ENCODE measurements at regions of chr3 and their contacts with region 1.

Region 1: GRCh38 chr3:124707656-124708062 is 22.6 kb upstream of the UMPS start:
- DNase-seq: peak in 1 of 2 experiments; percentile 35
- H3K4me3 ChIP-seq: no peak overlapping the region
- H3K27ac ChIP-seq: no peak overlapping the region
- H3K4me1 ChIP-seq: peaks cover 9% of the 10 kb centered on the region
- H3K27me3 ChIP-seq: no peaks in the 10 kb centered on the region
- CTCF ChIP-seq: no peak

Region 2: DNA sequence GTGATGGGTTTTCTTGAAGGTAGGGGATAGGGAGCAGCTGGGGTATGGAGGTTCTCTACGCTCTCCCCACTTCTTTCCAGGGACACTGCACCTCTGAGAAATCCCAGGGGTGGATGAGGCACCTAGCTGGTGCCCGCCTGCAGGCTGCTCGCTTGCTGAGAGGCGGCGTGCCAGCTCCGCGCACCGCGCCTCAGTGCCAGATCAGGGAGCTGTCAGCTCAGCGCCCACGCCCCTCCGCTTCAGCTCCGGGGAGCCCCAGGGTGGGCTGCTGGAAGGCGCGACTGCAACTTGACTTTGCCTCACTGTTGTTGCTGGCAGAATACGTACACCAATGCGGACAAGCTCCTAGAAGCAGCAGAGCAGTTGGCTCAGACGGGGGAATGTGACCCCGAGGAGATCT is 323.1 kb before region 1 on chr3:
- CTCF ChIA-PET with region 1: no interaction called
- POLR2A ChIA-PET with region 1: no interaction called
- intact Hi-C with region 1: no loop called
- DNase-seq: no peak
- H3K4me3 ChIP-seq: no peak overlapping the region
- H3K27ac ChIP-seq: no peak overlapping the region
- H3K4me1 ChIP-seq: no peaks in the 10 kb centered on the region
- H3K27me3 ChIP-seq: peaks cover 58% of the 10 kb centered on the region
- CTCF ChIP-seq: no peak

Region 3: DNA sequence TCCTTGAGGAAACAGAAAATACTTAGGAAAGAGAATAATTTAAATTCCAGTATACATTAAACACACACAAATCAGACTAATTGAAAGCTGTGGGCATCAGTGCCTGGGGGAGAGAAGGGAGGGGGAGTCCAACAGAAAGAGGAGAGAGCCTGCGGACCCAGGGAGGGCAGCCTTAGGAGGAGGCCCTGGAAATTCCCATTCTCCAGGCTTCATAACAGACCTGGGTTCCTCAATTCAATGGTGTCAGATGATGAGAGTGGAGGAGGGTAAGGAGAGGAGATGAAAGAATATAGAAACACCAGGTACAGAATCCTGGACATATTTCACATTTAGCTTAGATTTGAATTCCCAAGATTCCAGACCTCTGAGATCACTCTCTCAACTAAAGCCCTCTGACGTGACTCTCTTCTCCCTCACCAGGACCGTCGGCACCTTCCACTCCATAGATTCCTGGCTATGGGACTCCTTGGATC is 297.8 kb before region 1 on chr3:
- CTCF ChIA-PET with region 1: no interaction called
- POLR2A ChIA-PET with region 1: no interaction called
- intact Hi-C with region 1: no loop called
- DNase-seq: no peak
- H3K4me3 ChIP-seq: no peak overlapping the region
- H3K27ac ChIP-seq: no peak overlapping the region
- H3K4me1 ChIP-seq: no peaks in the 10 kb centered on the region
- H3K27me3 ChIP-seq: peaks cover 52% of the 10 kb centered on the region
- CTCF ChIP-seq: no peak

Region 4: DNA sequence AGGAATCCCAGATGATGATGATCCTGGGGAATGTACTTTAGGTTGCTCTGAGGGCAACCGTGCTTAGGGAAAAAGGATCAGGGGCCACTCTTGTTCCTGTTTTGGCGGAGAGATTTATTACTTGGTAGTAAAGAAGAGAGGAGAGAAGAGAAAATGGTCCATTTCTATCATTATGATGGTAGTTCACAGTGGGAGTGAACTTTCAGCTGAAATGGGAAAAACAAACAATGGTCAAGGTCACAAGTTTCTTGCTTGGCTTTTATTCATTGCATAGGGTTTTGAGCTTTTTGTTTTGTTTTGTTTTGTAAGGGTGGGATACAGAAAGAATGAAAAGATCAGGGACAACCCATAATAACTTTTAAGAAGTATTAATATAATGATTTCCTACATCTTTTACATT is 14.9 kb after region 1 on chr3:
- CTCF ChIA-PET with region 1: interaction called, 16 read pairs
- POLR2A ChIA-PET with region 1: no interaction called
- intact Hi-C with region 1: no loop called
- DNase-seq: no peak
- H3K4me3 ChIP-seq: no peak overlapping the region
- H3K27ac ChIP-seq: no peak overlapping the region
- H3K4me1 ChIP-seq: no peaks in the 10 kb centered on the region
- H3K27me3 ChIP-seq: peaks cover 5% of the 10 kb centered on the region; the same call in 1 of the 2 replicates
- CTCF ChIP-seq: no peak